B cell (primary cell): ENCODE measurements at regions of chr3 and their contacts with region 1.

Region 1: DNA sequence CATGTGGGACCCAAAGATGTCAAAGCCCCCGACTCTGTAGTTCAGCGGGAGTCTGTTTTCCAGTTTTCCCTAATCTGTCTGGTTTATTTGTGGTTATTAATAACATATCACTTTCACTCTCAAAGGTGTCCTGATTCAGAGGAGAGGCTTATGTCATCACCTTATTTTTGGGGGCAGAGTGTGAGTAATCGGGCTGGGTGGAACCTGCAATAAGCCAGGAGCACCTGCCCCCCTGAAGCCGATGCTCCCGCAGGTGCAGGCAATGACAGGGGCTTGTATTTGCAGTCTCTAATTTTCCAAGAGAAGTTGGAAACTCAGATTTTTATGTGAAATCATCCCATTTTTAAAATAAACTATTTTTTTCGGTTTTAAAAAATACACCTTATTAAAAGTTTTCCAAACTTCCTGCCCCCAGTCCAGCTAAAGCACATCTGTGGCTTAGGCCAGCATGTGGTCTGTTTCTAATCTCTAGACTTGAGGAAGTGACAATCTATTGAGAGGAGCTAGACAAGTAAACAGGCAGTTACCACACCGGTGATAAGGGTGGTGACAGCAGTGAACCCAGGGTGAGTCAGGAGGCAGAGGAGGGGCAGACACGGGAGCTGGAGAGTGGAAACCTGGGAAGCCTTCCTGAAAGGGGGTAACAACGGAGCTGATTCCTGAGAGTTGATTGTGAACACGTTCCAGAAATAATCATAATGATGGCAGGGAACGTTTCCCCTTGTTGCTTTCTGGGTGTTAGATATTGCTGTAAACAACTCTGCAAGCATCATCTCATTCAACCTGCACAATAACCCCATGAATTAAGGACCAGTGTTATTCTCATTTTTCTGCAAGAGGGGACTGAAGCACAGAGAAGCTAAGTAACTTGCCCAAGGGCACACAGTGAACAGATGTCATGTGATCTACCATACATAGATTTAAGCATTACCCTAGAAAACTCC is 37.3 kb downstream of the BHLHE40 start:
- DNase-seq: peak; percentile 73
- ATAC-seq: peak; percentile 22
- H3K4me3 ChIP-seq: peak overlapping the region in 1 of 5 experiments; percentile 25
- H3K4me3 Mint-ChIP-seq: peak overlapping the region; percentile 43
- H3K27ac ChIP-seq: peak overlapping the region; percentile 61 to 86
- H3K27ac Mint-ChIP-seq: peak overlapping the region; percentile 86
- H3K4me1 ChIP-seq: peaks cover 61 to 82% of the 10 kb centered on the region in 2 donors
- H3K4me1 Mint-ChIP-seq: peaks cover 78% of the 10 kb centered on the region
- H3K27me3 ChIP-seq: no peaks in the 10 kb centered on the region
- H3K27me3 Mint-ChIP-seq: no peaks in the 10 kb centered on the region
- CTCF ChIP-seq: no peak

Region 2: DNA sequence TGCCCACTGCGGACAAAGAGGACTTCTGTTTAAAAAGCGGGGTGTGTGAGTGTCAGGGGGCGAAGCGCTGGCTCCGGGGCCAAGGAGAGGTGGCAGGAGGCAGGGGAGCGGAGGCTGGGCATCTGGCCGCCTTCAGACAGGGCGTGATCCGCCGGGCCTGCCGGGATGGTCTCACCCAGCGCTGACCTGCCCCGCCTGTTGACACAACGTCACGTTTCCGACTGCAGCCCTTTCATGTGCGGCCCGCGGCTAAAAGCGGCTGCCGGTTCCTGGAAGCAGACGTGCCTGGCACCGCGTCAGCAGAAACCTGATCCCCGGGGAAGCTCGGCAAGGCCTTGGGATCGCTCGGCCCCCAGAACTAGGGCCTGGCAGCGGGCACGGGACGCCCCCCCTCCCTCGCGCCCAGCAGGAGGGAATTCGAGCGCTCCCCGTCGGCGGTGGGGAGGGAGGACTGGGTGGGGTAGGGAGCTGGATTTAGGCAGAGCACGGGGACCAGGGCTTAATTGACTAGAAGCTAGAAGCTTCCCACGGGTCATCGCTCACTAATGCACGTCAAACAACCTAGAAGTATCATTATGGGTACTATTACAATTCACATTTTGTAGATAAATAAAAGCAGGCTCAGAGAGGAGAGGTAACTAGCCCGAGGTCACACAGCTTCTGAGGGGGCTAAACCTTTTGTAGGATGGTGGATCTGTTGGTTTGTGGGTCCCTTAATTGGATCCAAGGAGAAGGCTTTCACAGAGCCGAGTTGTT is 29.5 kb before region 1 on chr3:
- CTCF ChIA-PET with region 1: interaction called, 77 read pairs
- POLR2A ChIA-PET with region 1: interaction called, 117 read pairs
- intact Hi-C with region 1: loop called (anchors 1 kb)
- DNase-seq: peak; percentile 77
- ATAC-seq: peak; percentile 42
- H3K4me3 ChIP-seq: peak overlapping the region; percentile 0 to 71 (median 68)
- H3K4me3 Mint-ChIP-seq: peak overlapping the region; percentile 90
- H3K27ac ChIP-seq: peak overlapping the region; percentile 86 to 92
- H3K27ac Mint-ChIP-seq: peak overlapping the region; percentile 94
- H3K4me1 ChIP-seq: peaks cover 57 to 65% of the 10 kb centered on the region in 2 donors
- H3K4me1 Mint-ChIP-seq: peaks cover 63% of the 10 kb centered on the region
- H3K27me3 ChIP-seq: no peaks in the 10 kb centered on the region
- H3K27me3 Mint-ChIP-seq: no peaks in the 10 kb centered on the region
- CTCF ChIP-seq: no peak

Region 3: DNA sequence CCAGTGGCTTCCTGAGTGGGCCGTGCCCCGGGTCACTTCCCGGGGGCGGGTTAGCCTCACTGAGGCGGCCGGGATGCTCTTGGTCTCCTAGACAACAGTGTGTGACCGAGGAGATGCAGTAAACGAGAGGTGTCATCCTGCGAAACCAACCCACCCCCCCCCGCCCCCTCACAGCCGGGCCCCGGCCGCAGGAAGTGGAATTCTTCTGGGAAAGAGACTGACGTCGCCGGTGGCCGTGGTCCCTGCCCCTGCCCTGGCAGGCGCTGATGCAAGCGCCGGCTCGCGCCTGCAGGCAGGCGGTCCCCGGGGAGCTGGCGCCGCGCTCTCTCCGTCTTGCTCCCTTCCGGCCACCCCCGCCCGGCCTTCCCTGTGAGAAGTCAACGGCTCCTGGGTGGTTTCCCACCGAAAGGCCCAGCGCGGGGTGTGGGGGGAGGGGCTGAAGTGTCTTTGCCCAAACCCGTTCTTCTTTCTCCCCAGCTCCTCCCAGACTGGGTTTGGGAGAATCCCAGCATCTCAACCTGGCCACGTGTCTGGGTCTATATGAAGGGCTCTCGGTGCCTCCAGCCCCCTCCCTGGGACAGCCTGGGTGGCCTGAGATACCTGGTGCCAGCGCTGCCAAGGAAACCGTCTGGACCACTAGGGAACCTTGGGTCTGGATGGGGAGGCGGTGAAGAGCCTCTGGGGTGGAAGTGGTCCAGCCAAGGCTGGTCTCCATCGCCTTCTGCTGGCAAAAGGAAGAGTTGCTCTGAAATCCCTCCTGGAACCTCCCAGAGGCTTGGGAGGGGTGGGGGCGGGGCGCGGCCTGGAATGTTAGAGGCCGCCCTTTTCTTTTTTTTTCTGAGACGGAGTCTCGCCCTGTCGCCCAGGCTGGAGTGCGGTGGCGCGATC is 10.1 kb after region 1 on chr3:
- CTCF ChIA-PET with region 1: interaction called, 32 read pairs
- POLR2A ChIA-PET with region 1: interaction called, 5 read pairs
- intact Hi-C with region 1: loop called (anchors 2 kb)
- DNase-seq: peak; percentile 80
- ATAC-seq: peak; percentile 78
- H3K4me3 ChIP-seq: peak overlapping the region; percentile 21 to 64 (median 57)
- H3K4me3 Mint-ChIP-seq: peak overlapping the region; percentile 91
- H3K27ac ChIP-seq: peak overlapping the region in 1 of 2 donors; percentile 65
- H3K27ac Mint-ChIP-seq: peak overlapping the region; percentile 84
- H3K4me1 ChIP-seq: peaks cover 4 to 18% of the 10 kb centered on the region in 2 donors
- H3K4me1 Mint-ChIP-seq: peaks cover 41% of the 10 kb centered on the region
- H3K27me3 ChIP-seq: no peaks in the 10 kb centered on the region
- H3K27me3 Mint-ChIP-seq: no peaks in the 10 kb centered on the region
- CTCF ChIP-seq: peak; percentile 59

Region 4: GRCh38 chr3:5122030-5122740 is 105.7 kb after region 1 on chr3 and contains the start of gene ARL8B:
- CTCF ChIA-PET with region 1: no interaction called
- POLR2A ChIA-PET with region 1: no interaction called
- intact Hi-C with region 1: loop called (anchors 2 kb)
- DNase-seq: peak; percentile 93
- ATAC-seq: peak; percentile 97
- H3K4me3 ChIP-seq: peak within 1 kb of the TSS; percentile 83 to 100 (median 97)
- H3K4me3 Mint-ChIP-seq: peak within 1 kb of the TSS; percentile 95
- H3K27ac ChIP-seq: peak within 1 kb of the TSS; percentile 88 to 95
- H3K27ac Mint-ChIP-seq: peak within 1 kb of the TSS; percentile 91
- H3K4me1 ChIP-seq: peaks cover 25 to 29% of the 10 kb centered on the region in 2 donors
- H3K4me1 Mint-ChIP-seq: peaks cover 37% of the 10 kb centered on the region
- H3K27me3 ChIP-seq: no peaks in the 10 kb centered on the region
- H3K27me3 Mint-ChIP-seq: no peaks in the 10 kb centered on the region
- CTCF ChIP-seq: peak; percentile 97
- total RNA-seq, gene ARL8B: 66.4 and 67.3 TPM in 2 replicates